Heart right ventricle (tissue), 16 donors: ENCODE measurements at regions of chr7 and their contacts with region 1.

Region 1: GRCh38 chr7:50119815-50120637 is 27.0 kb upstream of the ZPBP start:
- DNase-seq: no peak
- ATAC-seq: no peak
- H3K4me3 ChIP-seq: no peak overlapping the region
- H3K27ac ChIP-seq: no peak overlapping the region
- H3K4me1 ChIP-seq: no peaks in the 10 kb centered on the region
- H3K27me3 ChIP-seq: peaks cover 0 to 11% (median 5%) of the 10 kb centered on the region in 7 donors
- CTCF ChIP-seq: peak in 1 of 9 donors; percentile 10

Region 2: DNA sequence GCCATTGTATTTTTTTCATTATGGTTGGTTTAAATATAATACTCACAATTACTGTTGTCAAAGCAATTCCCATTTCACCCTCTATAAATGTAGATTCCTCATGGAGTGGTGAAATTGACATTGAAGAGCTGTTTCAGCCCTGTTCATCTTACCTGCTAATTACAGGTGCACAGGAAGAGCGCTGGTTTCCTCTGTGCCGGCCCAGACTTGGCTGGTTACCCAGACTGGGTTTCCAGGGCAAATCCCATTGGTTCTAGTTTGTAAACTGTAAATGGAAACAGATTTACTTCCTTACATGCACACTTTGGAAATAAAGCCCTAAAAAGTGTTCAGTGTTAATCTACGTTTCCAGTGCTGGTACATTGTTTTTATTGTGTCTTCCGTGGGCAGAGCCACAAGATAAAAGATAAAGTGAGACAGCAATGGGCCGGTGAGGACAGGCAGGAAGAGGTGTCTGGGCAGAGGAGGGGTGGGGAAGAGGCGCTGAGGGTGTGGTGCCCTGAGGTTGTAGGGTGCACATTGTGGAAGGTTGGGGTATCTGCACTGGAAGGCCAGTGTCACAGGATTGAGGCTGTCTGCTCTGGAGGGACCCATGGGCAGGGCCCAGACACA is 44.6 kb after region 1 on chr7:
- intact Hi-C with region 1: no loop called
- DNase-seq: no peak
- ATAC-seq: no peak
- H3K4me3 ChIP-seq: no peak overlapping the region
- H3K27ac ChIP-seq: no peak overlapping the region
- H3K4me1 ChIP-seq: peaks cover 0 to 4% (median 0%) of the 10 kb centered on the region in 9 donors
- H3K27me3 ChIP-seq: peaks cover 0 to 7% (median 0%) of the 10 kb centered on the region in 7 donors
- CTCF ChIP-seq: no peak

Region 3: GRCh38 chr7:50174948-50175347 is 54.9 kb after region 1 on chr7:
- intact Hi-C with region 1: loop called in 1 of 10 experiments (anchors 10 kb)
- DNase-seq: no peak
- ATAC-seq: no peak
- H3K4me3 ChIP-seq: no peak overlapping the region
- H3K27ac ChIP-seq: no peak overlapping the region
- H3K4me1 ChIP-seq: peaks cover 0 to under 1% (median 0%) of the 10 kb centered on the region in 9 donors
- H3K27me3 ChIP-seq: peaks cover 0 to 50% (median 20%) of the 10 kb centered on the region in 7 donors
- CTCF ChIP-seq: no peak